IMR-90 (cell line): ENCODE measurements at regions of chr2 and their contacts with region 1.

Region 1: DNA sequence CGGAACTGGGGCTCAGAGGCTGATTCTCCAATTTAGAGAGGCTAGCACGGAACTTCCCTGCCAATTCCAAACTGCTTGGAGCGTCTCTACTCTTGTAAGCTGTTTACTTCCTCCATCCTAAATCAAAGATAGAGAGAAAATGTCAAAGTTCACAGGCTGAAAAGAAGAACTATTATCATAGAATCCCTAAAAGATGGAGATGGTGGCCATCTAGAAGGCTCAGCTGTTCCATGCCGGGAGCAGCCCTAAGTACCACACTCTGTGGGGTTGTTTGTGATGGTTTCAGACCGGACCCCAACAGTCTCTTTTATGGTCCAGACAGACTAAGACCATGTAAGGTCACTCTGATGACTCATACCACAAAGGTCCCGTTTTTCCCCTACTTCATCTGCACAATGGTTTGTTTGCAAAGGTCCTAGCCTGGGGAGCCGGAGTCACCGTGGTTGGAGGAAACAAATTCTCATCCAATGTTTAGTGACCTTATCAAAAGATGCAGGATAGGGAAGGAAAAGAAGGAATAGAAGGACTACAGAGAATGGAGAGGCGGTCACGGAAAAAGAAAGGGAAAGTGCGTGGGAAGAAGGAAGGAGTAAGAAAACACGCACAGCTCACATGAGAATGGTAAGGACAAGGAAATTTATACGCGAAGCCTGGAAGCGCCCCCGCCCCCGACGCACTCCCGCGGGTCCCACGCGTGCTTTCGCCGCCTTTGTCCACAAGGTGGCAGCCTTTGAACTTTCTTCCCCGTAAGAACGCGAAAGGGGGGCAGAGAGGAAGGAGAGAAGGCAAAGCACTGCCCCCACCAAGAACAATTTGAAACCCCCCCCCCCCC is 453 bp upstream of the ANTXR1 start:
- DNase-seq: peak; percentile 76
- ATAC-seq: peak; percentile 68
- H3K4me3 ChIP-seq: peak overlapping the region; percentile 99
- H3K27ac ChIP-seq: peak overlapping the region; percentile 89
- H3K4me1 ChIP-seq: peaks cover 3% of the 10 kb centered on the region; the same call in 1 of the 2 replicates
- H3K27me3 ChIP-seq: no peaks in the 10 kb centered on the region
- CTCF ChIP-seq: peak; percentile 78
- POLR2A ChIP-seq: no peak
- RAD21 ChIP-seq: peak; percentile 74

Region 2: DNA sequence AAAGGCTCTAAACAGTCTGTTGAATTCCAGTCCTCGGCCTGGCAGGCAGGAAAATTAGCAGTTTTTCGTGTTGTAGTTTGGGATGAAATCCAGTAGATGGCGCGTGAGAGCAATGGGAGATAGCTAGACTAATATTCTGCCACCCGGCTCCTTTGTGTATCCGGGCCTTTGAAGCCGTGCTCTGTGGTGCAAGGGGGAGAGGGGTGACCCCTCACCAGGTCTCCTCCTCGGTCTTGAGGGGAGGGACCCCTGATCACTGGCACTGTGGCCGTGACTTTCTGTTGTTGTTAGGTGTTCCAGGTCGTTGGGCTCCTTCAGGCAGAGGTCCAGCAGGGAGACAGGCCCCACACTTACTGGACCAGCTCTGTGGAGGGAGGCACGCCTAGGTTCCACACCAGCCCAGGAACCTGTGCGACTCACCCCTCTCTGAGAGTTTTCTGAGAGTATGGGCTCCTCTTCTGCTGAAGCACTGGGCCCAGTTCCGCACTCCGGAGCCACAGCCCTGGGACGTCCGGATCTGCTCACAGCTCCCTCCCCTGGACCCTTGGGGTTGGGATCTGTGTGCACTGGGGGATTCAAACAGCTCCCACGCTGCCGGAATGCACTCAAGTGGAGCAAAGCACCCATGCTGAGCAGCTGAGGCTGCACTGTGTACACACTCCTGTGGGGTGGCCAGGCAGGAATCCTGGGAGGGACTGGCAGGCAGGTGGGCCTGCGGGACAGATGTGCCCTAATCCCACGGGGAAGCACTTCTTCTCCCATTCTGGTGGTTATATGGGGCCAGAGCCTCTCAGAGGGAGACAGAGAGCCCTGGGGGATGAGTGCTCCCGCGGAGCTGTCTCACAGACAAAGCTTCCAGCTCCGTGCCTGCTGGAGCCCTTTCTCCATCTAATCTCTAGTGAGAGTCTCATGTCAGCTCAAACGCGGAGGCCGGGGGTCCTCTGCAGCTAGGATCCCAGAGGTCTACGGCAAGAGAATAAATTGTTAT is 68.7 kb before region 1 on chr2:
- CTCF ChIA-PET with region 1: interaction called, 3 read pairs
- POLR2A ChIA-PET with region 1: no interaction called
- dilution Hi-C with region 1: no loop called
- in situ Hi-C with region 1: no loop called
- intact Hi-C with region 1: loop called (anchors 1 kb)
- DNase-seq: peak; percentile 64
- ATAC-seq: peak; percentile 98
- H3K4me3 ChIP-seq: no peak overlapping the region
- H3K27ac ChIP-seq: peak overlapping the region; percentile 61
- H3K4me1 ChIP-seq: peaks cover 5% of the 10 kb centered on the region
- H3K27me3 ChIP-seq: no peaks in the 10 kb centered on the region
- CTCF ChIP-seq: peak; percentile 76
- POLR2A ChIP-seq: 0 out of 2 replicates have a peak, but pooled peaks have one; percentile 28
- RAD21 ChIP-seq: peak; percentile 82

Region 3: GRCh38 chr2:69095305-69095704 is 82.8 kb after region 1 on chr2:
- CTCF ChIA-PET with region 1: no interaction called
- POLR2A ChIA-PET with region 1: interaction called, 27 read pairs
- dilution Hi-C with region 1: no loop called
- in situ Hi-C with region 1: no loop called
- intact Hi-C with region 1: no loop called
- DNase-seq: peak; percentile 94
- ATAC-seq: peak; percentile 93
- H3K4me3 ChIP-seq: no peak overlapping the region
- H3K27ac ChIP-seq: peak overlapping the region; percentile 67; the same call in 1 of the 2 replicates
- H3K4me1 ChIP-seq: peaks cover 9% of the 10 kb centered on the region
- H3K27me3 ChIP-seq: no peaks in the 10 kb centered on the region
- CTCF ChIP-seq: no peak
- POLR2A ChIP-seq: no peak
- RAD21 ChIP-seq: no peak

Region 4: DNA sequence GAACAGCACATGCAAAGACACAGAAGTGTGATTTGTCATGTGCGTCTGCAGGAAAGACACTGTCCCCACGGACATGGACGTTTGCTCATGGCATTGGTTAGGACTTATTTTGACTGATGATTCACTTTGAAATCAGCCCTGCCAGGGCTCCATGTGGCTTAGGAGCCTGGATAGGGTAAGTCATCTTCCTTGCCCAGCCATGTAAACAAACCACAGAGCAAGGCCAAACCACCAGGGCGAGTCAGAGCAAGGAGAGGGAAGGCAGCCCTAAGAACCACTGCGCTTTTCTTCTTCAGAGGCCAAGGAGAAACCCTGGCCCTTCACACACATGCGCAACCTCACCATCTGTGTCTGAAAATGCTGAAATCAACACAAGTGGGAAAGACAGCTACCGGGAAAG is 285.7 kb after region 1 on chr2:
- CTCF ChIA-PET with region 1: no interaction called
- POLR2A ChIA-PET with region 1: no interaction called
- dilution Hi-C with region 1: loop called (anchors 25 kb)
- in situ Hi-C with region 1: no loop called
- intact Hi-C with region 1: loop called (anchors 2 kb)
- DNase-seq: peak; percentile 94
- ATAC-seq: peak; percentile 93
- H3K4me3 ChIP-seq: no peak overlapping the region
- H3K27ac ChIP-seq: peak overlapping the region; percentile 64
- H3K4me1 ChIP-seq: peaks cover 20% of the 10 kb centered on the region
- H3K27me3 ChIP-seq: no peaks in the 10 kb centered on the region
- CTCF ChIP-seq: 0 out of 2 replicates have a peak, but pooled peaks have one; percentile 2
- POLR2A ChIP-seq: no peak
- RAD21 ChIP-seq: peak; percentile 41; the same call in 1 of the 2 replicates